PC-3 (cell line): ENCODE measurements at regions of chr4 and their contacts with region 1.

Region 1: DNA sequence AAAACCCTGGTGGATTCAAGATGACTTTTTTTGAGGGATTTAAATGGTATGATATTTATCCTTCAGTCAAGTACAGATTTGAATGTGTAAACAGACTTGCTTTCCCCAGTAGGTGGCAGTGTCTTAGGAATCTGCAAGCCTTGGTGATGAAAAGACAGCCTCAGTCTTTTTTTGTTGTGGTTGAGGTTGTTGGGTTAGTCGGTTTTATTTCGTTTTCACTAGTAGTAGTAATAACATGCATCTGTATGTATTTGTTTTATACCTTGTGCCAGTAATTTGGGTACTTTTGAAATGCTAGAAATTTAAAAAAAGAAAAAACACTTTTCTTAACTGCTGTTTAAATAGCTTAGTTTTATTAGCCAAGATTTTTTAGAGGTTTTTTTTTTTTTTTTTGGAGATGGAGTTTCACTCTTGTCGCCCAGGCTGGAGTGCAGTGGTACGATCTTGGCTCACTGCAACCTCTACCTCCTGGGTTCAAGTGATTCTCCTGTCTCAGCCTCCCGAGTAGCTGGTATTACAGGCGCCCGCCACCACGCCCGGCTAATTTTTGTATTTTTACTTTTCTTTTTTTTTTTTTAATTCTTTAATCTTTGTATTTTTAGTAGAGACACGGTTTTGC is 39.2 kb downstream of the COPS4 start:
- DNase-seq: peak; percentile 70
- ATAC-seq: peak; percentile 57
- H3K4me3 ChIP-seq: no peak overlapping the region
- H3K27ac ChIP-seq: no peak overlapping the region
- H3K4me1 ChIP-seq: peaks cover 21% of the 10 kb centered on the region
- H3K27me3 ChIP-seq: no peaks in the 10 kb centered on the region
- CTCF ChIP-seq: peak; percentile 79

Region 2: GRCh38 chr4:83110223-83110945 is 36.2 kb after region 1 on chr4:
- CTCF ChIA-PET with region 1: no interaction called
- POLR2A ChIA-PET with region 1: no interaction called
- intact Hi-C with region 1: loop called (anchors 5 kb)
- DNase-seq: peak; percentile 86
- ATAC-seq: peak; percentile 87
- H3K4me3 ChIP-seq: peak overlapping the region; percentile 77
- H3K27ac ChIP-seq: peak overlapping the region; percentile 30; the same call in 1 of the 2 replicates
- H3K4me1 ChIP-seq: peaks cover 20% of the 10 kb centered on the region
- H3K27me3 ChIP-seq: no peaks in the 10 kb centered on the region
- CTCF ChIP-seq: peak; percentile 77

Region 3: DNA sequence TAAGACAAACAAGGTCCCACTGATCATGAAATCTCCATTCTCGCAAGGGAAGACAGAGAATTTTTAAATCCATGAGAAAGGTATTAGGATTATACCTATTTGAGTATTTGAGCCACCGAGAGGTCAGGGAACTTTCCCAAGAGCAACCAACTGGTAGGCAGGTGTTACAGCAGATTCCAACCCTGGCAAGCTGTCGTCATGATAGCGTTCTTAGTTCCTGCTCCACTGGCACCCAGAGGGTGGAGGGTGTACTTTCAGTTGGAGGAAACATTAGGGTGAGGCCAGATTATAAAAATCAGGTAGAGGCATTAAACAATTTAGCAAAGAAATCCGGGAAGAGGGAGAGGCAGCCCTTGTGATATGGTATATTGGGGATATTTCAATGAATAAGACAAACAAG is 187.1 kb after region 1 on chr4:
- CTCF ChIA-PET with region 1: no interaction called
- POLR2A ChIA-PET with region 1: no interaction called
- intact Hi-C with region 1: loop called (anchors 2 kb)
- DNase-seq: no peak
- ATAC-seq: no peak
- H3K4me3 ChIP-seq: no peak overlapping the region
- H3K27ac ChIP-seq: no peak overlapping the region
- H3K4me1 ChIP-seq: peaks cover 18% of the 10 kb centered on the region
- H3K27me3 ChIP-seq: no peaks in the 10 kb centered on the region
- CTCF ChIP-seq: no peak

Region 4: DNA sequence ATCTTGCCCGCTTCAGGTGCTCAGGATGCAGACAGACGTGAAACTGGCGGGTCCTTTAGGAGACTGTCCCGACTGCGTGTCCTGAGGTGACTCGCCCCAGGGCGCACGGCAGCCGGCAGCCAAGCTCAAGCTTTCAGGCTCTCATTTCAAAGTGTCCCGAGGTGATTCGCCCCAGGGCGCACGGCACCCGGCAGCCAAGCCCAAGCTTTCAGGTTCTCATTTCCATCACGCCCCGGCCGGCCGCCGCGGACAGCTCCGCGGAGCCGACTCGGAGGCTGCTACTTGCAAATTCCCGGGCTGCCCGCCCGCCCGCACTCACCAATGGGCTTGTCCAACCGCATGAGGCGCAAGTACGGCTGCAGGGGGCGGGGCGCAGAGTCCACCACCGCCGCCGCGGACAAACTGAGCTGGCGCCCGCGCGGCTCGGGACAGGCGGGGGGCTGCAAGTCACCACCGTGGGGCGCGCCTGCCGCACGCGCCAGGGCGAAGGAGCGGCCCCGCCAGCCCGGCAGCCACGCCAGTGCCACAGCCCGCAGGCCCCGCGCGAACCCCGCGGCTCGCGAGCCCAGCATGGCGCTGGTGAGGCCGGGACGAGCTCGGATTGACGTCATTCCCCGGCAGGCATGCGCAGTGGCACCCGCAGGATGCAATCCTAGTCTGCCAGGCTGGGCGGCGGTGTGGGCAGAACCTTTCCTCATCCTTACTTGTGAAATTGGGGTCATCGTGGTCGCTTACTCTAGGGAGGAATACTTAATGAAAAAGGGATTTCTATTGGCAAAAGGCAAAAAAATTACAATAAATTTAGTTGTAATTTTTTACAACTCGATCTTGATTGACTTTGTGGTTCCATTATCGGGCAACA is 210.2 kb after region 1 on chr4 and contains the start of gene COQ2:
- CTCF ChIA-PET with region 1: interaction called, 4 read pairs
- POLR2A ChIA-PET with region 1: no interaction called
- intact Hi-C with region 1: loop called (anchors 1 kb)
- DNase-seq: peak; percentile 87
- ATAC-seq: peak; percentile 86
- H3K4me3 ChIP-seq: peak within 1 kb of the TSS; percentile 91
- H3K27ac ChIP-seq: peak within 1 kb of the TSS; percentile 81
- H3K4me1 ChIP-seq: peaks cover 27% of the 10 kb centered on the region
- H3K27me3 ChIP-seq: no peaks in the 10 kb centered on the region
- CTCF ChIP-seq: 0 out of 2 replicates have a peak, but pooled peaks have one; percentile 15
- total RNA-seq, gene COQ2: 22.0 and 23.8 TPM in 2 replicates